T-cell (primary cell): ENCODE measurements at regions of chr6 and their contacts with region 1.

Region 1: GRCh38 chr6:29752451-29753308 is 29.4 kb downstream of the HLA-F start:
- DNase-seq: peak; percentile 51 to 93 (median 78)
- ATAC-seq: peak; percentile 66 to 75 (median 72)
- H3K4me3 ChIP-seq: peak overlapping the region; percentile 86 to 89
- H3K4me3 Mint-ChIP-seq: peak overlapping the region; percentile 91 to 96 (median 96)
- H3K27ac ChIP-seq: peak overlapping the region; percentile 88
- H3K27ac Mint-ChIP-seq: peak overlapping the region; percentile 93 to 94
- H3K4me1 ChIP-seq: peaks cover 3 to 27% of the 10 kb centered on the region in 2 experiments
- H3K4me1 Mint-ChIP-seq: peaks cover 33 to 51% (median 44%) of the 10 kb centered on the region in 3 donors
- H3K27me3 ChIP-seq: no peaks in the 10 kb centered on the region
- H3K27me3 Mint-ChIP-seq: no peaks in the 10 kb centered on the region

Region 2: GRCh38 chr6:29708432-29709179 is 44.1 kb before region 1 on chr6:
- CTCF ChIA-PET with region 1: interaction called, 4 to 14 read pairs
- POLR2A ChIA-PET with region 1: no interaction called
- DNase-seq: peak; percentile 44 to 96 (median 79)
- ATAC-seq: peak; percentile 91 to 95 (median 93)
- H3K4me3 ChIP-seq: peak overlapping the region; percentile 12 to 32
- H3K4me3 Mint-ChIP-seq: peak overlapping the region; percentile 69 to 82 (median 76)
- H3K27ac ChIP-seq: peak overlapping the region; percentile 65
- H3K27ac Mint-ChIP-seq: peak overlapping the region; percentile 89 to 96
- H3K4me1 ChIP-seq: peaks cover 33 to 65% of the 10 kb centered on the region in 2 experiments
- H3K4me1 Mint-ChIP-seq: peaks cover 75 to 85% (median 81%) of the 10 kb centered on the region in 3 donors
- H3K27me3 ChIP-seq: peaks cover 2 to 5% of the 10 kb centered on the region in 2 experiments
- H3K27me3 Mint-ChIP-seq: no peaks in the 10 kb centered on the region

Region 3: GRCh38 chr6:29723262-29723665 is 29.4 kb before region 1 on chr6 and contains the start of gene HLA-F:
- CTCF ChIA-PET with region 1: interaction called, 3 to 4 read pairs
- POLR2A ChIA-PET with region 1: interaction called, 4 to 10 read pairs
- DNase-seq: peak in 33 of 35 experiments; percentile 66 to 96 (median 81)
- ATAC-seq: peak; percentile 88 to 89 (median 88)
- H3K4me3 ChIP-seq: peak within 1 kb of the TSS; percentile 72 to 96
- H3K4me3 Mint-ChIP-seq: peak within 1 kb of the TSS; percentile 91 to 96 (median 94)
- H3K27ac ChIP-seq: peak within 1 kb of the TSS; percentile 97
- H3K27ac Mint-ChIP-seq: peak within 1 kb of the TSS; percentile 98 to 99
- H3K4me1 ChIP-seq: peaks cover 38 to 54% of the 10 kb centered on the region in 2 experiments
- H3K4me1 Mint-ChIP-seq: peaks cover 49 to 56% (median 54%) of the 10 kb centered on the region in 3 donors
- H3K27me3 ChIP-seq: no peaks in the 10 kb centered on the region
- H3K27me3 Mint-ChIP-seq: no peaks in the 10 kb centered on the region
- total RNA-seq, gene HLA-F: 600 to 951 (median 748) TPM

Region 4: DNA sequence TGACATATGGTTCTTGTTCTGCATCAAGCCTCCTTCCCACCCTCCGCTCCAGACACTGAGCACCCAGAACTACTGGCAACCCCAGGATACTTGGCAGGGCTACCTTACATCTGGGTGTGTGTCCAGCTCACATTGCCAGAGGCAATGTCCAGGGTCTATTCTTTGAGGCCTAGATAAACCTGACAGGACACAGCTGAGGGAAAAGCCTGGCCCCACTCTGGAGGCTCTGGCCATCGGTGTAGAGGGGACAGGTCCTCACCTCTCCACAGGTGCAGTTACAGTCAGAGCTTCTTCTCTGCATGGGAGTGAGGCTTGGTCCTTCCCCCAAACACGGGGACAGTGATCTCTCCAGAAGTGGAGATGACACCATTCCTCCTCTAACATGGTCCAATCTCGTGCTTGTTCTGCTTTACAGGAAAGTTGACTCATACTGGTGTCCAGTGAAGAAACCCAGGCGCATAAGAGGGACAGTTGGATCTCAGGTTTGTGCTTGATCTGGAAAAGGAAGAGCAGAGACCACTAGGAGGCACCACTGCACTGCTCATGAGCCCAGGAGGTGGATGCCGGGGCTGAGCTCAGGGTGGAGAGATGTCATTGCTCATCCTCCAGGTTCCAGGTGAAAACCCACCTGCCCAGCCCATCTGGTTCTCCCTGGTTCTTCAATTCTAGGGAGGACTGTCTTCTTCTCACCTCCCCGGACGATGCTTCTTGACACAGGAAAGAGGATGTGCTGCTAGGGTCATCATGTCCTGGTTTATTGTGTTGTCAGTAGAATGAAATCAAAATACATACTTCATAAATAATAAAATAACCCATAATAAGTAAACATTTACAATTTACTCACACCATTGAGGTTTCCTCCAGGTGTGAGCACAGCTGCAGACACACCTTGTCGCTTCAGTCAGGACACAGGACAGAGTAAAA is 14.7 kb before region 1 on chr6:
- CTCF ChIA-PET with region 1: interaction called, 7 to 27 read pairs
- POLR2A ChIA-PET with region 1: interaction called, 3 to 12 read pairs
- DNase-seq: peak in 34 of 35 experiments; percentile 38 to 88 (median 64)
- ATAC-seq: peak; percentile 77 to 91 (median 84)
- H3K4me3 ChIP-seq: no peak overlapping the region
- H3K4me3 Mint-ChIP-seq: no peak overlapping the region
- H3K27ac ChIP-seq: no peak overlapping the region
- H3K27ac Mint-ChIP-seq: no peak overlapping the region
- H3K4me1 ChIP-seq: no peaks in the 10 kb centered on the region
- H3K4me1 Mint-ChIP-seq: peaks cover 7 to 18% (median 7%) of the 10 kb centered on the region in 3 donors
- H3K27me3 ChIP-seq: no peaks in the 10 kb centered on the region
- H3K27me3 Mint-ChIP-seq: no peaks in the 10 kb centered on the region

Region 5: GRCh38 chr6:29909985-29910384 is 157.3 kb after region 1 on chr6:
- CTCF ChIA-PET with region 1: no interaction called
- POLR2A ChIA-PET with region 1: no interaction called
- DNase-seq: no peak
- ATAC-seq: no peak
- H3K4me3 ChIP-seq: no peak overlapping the region
- H3K4me3 Mint-ChIP-seq: no peak overlapping the region
- H3K27ac ChIP-seq: no peak overlapping the region
- H3K27ac Mint-ChIP-seq: no peak overlapping the region
- H3K4me1 ChIP-seq: no peaks in the 10 kb centered on the region
- H3K4me1 Mint-ChIP-seq: no peaks in the 10 kb centered on the region
- H3K27me3 ChIP-seq: peaks cover 0 to 25% of the 10 kb centered on the region in 2 experiments
- H3K27me3 Mint-ChIP-seq: peaks cover 2 to 27% of the 10 kb centered on the region in 2 donors